ENCODE measurements at regions of chr6 and their contacts with region 1.

Region 1: GRCh38 chr6:152954443-152954842 is 28.4 kb downstream of the FBXO5 start:
- DNase-seq: no peak
- H3K4me3 ChIP-seq: no peak overlapping the region
- H3K27ac ChIP-seq: no peak overlapping the region
- H3K4me1 ChIP-seq: peaks cover 11% of the 10 kb centered on the region
- H3K27me3 ChIP-seq: no peaks in the 10 kb centered on the region
- CTCF ChIP-seq: peak in 1 of 2 donors; percentile 12
- POLR2A ChIP-seq: no peak

Region 2: DNA sequence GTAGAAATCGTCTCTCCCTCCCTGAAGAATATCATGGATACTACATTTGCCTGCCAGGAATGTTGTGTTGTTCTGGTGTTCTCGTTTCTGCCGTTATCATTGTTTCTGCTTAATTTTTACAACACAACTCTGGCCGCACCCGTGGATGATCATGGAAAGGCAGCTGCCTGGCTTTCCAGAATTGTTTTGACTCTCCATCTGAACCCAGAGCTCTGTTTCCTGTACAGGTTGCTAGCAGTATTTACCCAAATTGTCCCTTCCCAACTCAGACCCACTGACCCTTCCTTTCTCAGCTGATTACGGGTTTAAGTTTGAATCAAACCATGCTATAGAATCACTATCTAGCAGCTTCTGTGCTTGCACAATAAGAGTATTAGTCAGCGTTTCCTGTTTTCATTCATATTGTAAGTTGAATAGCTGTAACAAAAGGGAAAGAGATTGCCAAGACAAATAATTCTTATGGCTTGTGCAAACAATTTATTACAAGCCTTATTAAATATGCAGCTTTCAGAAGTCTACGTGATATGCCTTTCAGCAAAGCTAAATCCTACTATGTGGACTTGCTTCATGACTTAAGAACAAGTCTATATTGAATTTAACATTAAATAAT is 1949.9 kb before region 1 on chr6:
- CTCF ChIA-PET with region 1: no interaction called
- POLR2A ChIA-PET with region 1: no interaction called
- dilution Hi-C with region 1: no loop called
- intact Hi-C with region 1: no loop called
- DNase-seq: peak; percentile 100
- H3K4me3 ChIP-seq: no peak overlapping the region
- H3K27ac ChIP-seq: peak overlapping the region; percentile 94
- H3K4me1 ChIP-seq: peaks cover 41% of the 10 kb centered on the region
- H3K27me3 ChIP-seq: no peaks in the 10 kb centered on the region
- CTCF ChIP-seq: no peak
- POLR2A ChIP-seq: peak; percentile 71

Region 3: GRCh38 chr6:152969688-152970418 is 15.4 kb after region 1 on chr6:
- CTCF ChIA-PET with region 1: interaction called, 11 read pairs
- POLR2A ChIA-PET with region 1: no interaction called
- dilution Hi-C with region 1: no loop called
- intact Hi-C with region 1: no loop called
- DNase-seq: no peak
- H3K4me3 ChIP-seq: no peak overlapping the region
- H3K27ac ChIP-seq: no peak overlapping the region
- H3K4me1 ChIP-seq: no peaks in the 10 kb centered on the region
- H3K27me3 ChIP-seq: no peaks in the 10 kb centered on the region
- CTCF ChIP-seq: no peak
- POLR2A ChIP-seq: no peak

Region 4: GRCh38 chr6:152976749-152977148 is 22.3 kb after region 1 on chr6:
- CTCF ChIA-PET with region 1: interaction called, 16 read pairs
- POLR2A ChIA-PET with region 1: no interaction called
- dilution Hi-C with region 1: no loop called
- intact Hi-C with region 1: no loop called
- DNase-seq: no peak
- H3K4me3 ChIP-seq: no peak overlapping the region
- H3K27ac ChIP-seq: no peak overlapping the region
- H3K4me1 ChIP-seq: peaks cover 37% of the 10 kb centered on the region
- H3K27me3 ChIP-seq: no peaks in the 10 kb centered on the region
- CTCF ChIP-seq: no peak
- POLR2A ChIP-seq: no peak

Region 5: GRCh38 chr6:153059761-153060160 is 105.3 kb after region 1 on chr6:
- CTCF ChIA-PET with region 1: no interaction called
- POLR2A ChIA-PET with region 1: no interaction called
- dilution Hi-C with region 1: no loop called
- intact Hi-C with region 1: no loop called
- DNase-seq: peak; percentile 6
- H3K4me3 ChIP-seq: no peak overlapping the region
- H3K27ac ChIP-seq: no peak overlapping the region
- H3K4me1 ChIP-seq: no peaks in the 10 kb centered on the region
- H3K27me3 ChIP-seq: no peaks in the 10 kb centered on the region
- CTCF ChIP-seq: no peak
- POLR2A ChIP-seq: no peak

Measured in endothelial cell of umbilical vein (primary cell).